ENCODE measurements at regions of chr11 and their contacts with region 1.

Region 1: DNA sequence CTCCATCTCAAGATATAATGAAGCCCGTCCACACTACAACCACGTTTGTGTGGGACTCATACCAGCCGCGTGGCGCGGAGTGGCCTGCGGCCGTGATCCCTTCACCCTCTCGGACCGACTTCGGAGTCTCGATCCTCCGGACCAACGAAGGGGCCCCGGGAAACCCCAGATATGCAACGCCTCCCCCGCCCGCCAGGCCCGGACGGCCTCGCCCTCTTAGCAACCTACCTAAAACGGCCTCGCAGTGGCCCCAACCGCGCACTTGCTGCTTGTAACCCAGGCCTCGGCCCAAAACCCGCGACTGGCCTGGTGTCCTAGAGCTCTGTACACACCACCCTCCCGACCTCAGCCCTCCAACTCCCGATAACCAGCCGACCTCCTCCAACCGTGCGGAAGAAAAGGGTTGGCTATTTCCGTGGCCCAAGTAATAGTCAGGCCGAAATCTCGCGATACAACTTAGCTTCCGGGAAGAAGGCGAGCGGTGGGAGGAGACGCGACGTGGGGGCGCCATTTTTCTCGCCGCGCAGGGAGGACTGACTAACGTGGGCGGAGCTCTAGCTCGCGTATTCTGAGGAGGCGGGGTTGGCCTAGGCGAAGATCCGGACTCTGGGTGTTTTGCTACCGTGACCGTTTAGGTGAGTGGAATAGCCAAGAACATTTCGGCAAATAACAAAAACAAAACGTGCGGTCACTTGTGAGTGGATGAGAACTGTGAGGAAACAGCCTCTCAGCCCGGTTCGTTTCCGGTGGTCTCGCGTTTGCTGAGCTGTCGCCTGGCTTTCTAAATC is at the starts of genes C11orf54 and TAF1D:
- DNase-seq: peak; percentile 99
- ATAC-seq: peak; percentile 87
- H3K4me3 ChIP-seq: peak within 1 kb of the TSS; percentile 96
- H3K27ac ChIP-seq: peak within 1 kb of the TSS; percentile 75
- H3K4me1 ChIP-seq: peaks cover 30% of the 10 kb centered on the region
- H3K27me3 ChIP-seq: no peaks in the 10 kb centered on the region
- CTCF ChIP-seq: no peak
- total RNA-seq, gene C11orf54: 24.3 and 32.4 TPM in 2 replicates
- total RNA-seq, gene TAF1D: 117 and 135 TPM in 2 replicates

Region 2: DNA sequence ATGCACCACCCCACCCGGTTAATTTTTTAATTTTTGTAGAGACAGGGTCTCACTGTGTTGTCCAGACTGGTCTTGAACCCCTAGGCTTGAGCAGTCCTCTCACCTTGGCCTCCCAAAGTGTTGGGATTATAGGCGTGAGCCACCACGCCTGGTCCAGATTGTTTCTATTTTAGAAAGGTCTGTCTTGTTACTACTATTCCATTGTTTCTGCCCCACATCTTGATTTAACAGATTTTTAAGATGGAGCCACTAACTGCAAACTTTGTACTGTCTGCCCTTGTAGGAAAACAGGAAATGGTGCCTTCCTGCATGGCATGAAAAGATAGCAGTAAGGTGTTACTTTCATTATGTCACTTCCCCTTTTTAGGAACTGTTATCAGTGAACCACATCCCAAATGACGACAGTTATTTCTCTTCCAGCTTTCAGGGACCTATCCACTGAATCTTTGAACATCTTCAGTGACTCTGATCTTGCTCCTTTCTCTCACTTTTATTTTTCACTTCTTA is 23.2 kb before region 1 on chr11:
- CTCF ChIA-PET with region 1: no interaction called
- POLR2A ChIA-PET with region 1: interaction called, 18 read pairs
- intact Hi-C with region 1: no loop called
- DNase-seq: no peak
- ATAC-seq: no peak
- H3K4me3 ChIP-seq: no peak overlapping the region
- H3K27ac ChIP-seq: no peak overlapping the region
- H3K4me1 ChIP-seq: no peaks in the 10 kb centered on the region
- H3K27me3 ChIP-seq: no peaks in the 10 kb centered on the region
- CTCF ChIP-seq: no peak

Region 3: GRCh38 chr11:93727985-93728791 is 13.1 kb before region 1 on chr11:
- CTCF ChIA-PET with region 1: no interaction called
- POLR2A ChIA-PET with region 1: interaction called, 23 read pairs
- intact Hi-C with region 1: no loop called
- DNase-seq: no peak
- ATAC-seq: no peak; the same call in 1 of the 2 replicates
- H3K4me3 ChIP-seq: no peak overlapping the region
- H3K27ac ChIP-seq: no peak overlapping the region
- H3K4me1 ChIP-seq: no peaks in the 10 kb centered on the region
- H3K27me3 ChIP-seq: no peaks in the 10 kb centered on the region
- CTCF ChIP-seq: no peak

Region 4: DNA sequence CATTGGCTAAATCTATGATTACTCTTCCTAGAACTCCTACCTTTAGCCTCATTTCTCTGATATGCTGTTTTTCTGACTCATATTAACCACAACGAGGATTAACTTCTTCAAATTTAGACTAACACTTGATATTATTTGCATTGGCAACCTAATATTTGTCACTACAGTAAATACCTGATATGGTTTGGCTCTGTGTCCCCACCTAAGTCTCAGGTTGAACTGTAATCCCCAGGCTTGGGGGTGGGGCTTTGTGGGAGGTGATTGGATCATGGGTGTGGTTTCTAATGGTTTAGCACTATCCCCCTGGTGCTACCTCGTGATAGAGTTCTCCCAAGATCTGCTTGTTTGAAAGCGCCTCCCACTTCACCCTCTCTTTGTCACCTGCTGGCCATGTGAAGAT is 25.7 kb after region 1 on chr11:
- CTCF ChIA-PET with region 1: no interaction called
- POLR2A ChIA-PET with region 1: interaction called, 3 read pairs
- intact Hi-C with region 1: loop called (anchors 2 kb)
- DNase-seq: peak; percentile 83
- ATAC-seq: peak; percentile 84
- H3K4me3 ChIP-seq: 0 out of 2 replicates have a peak overlapping the region, but pooled peaks have one; percentile 15
- H3K27ac ChIP-seq: peak overlapping the region; percentile 59
- H3K4me1 ChIP-seq: peaks cover 14% of the 10 kb centered on the region
- H3K27me3 ChIP-seq: no peaks in the 10 kb centered on the region
- CTCF ChIP-seq: no peak

Region 5: DNA sequence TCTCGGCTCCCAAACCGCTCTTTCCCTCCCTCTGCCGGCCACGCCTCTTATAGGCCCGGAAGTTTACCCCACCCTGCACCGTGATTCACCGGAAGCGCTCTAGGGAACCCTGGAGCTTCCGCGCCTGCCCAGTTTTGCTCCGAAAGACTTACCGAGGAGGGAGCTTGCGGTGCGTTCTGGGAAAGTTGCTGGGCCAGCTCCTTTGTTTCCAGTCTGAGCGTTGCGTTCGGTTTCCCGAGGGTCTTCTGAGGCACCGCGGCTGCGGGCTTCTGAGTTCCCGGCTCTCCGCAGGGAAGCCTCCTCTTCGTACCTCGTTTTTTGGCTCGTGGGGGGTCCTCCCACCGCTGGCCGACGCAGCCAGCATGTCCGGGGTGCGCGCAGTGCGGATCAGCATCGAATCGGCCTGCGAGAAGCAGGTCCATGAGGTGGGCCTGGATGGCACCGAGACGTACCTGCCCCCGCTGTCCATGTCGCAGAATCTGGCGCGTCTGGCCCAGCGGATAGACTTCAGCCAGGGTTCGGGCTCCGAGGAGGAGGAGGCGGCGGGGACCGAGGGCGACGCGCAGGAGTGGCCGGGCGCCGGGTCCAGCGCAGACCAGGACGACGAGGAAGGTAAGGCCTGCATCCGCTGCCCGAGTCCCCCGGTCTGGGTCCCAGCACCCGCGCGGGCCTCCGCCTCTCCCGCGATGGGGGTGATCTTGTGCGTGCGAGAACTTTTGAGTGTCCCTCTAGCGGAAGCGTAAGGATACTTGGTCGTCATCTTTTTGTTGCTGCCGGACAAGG is 43.1 kb after region 1 on chr11 and contains the start of gene MED17:
- CTCF ChIA-PET with region 1: no interaction called
- POLR2A ChIA-PET with region 1: interaction called, 22 read pairs
- intact Hi-C with region 1: loop called (anchors 1 kb)
- DNase-seq: peak; percentile 98
- ATAC-seq: peak; percentile 93
- H3K4me3 ChIP-seq: peak within 1 kb of the TSS; percentile 92
- H3K27ac ChIP-seq: peak within 1 kb of the TSS; percentile 74
- H3K4me1 ChIP-seq: peaks cover 23% of the 10 kb centered on the region
- H3K27me3 ChIP-seq: no peaks in the 10 kb centered on the region
- CTCF ChIP-seq: peak; percentile 59
- total RNA-seq, gene MED17: 50.6 and 58.5 TPM in 2 replicates